ENCODE measurements at regions of chr2 and their contacts with region 1.

Region 1: GRCh38 chr2:197113275-197113711 is 186.8 kb upstream of the PGAP1 start:
- DNase-seq: no peak
- H3K4me3 ChIP-seq: no peak overlapping the region
- H3K27ac ChIP-seq: no peak overlapping the region
- H3K4me1 ChIP-seq: peaks cover 0 to 12% (median under 1%) of the 10 kb centered on the region in 4 donors
- H3K27me3 ChIP-seq: no peaks in the 10 kb centered on the region
- CTCF ChIP-seq: peak; percentile 56 to 71 (median 62)
- EP300 ChIP-seq: no peak
- POLR2A ChIP-seq: no peak

Region 2: DNA sequence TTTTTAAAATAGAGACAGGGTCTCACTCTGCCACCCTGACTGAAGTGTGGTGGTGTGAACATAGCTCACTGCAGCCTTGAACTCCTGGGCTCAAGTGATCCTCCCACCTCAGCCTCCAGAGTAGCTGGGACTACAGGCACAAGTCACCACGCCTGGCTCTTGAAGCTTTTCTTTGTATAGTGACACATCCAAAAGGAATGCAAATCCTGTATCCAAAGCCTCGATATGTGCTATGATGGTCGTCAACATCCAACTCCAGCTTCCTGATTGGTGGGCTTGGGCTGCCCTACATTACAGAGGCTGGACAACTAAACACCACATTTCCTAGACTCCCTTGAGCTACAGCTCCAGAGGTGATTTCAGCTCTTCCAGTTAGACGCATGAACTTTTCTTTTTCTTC is 85.1 kb before region 1 on chr2:
- in situ Hi-C with region 1: no loop called
- intact Hi-C with region 1: no loop called
- DNase-seq: no peak
- H3K4me3 ChIP-seq: no peak overlapping the region
- H3K27ac ChIP-seq: no peak overlapping the region
- H3K4me1 ChIP-seq: peaks cover 0 to 4% (median 2%) of the 10 kb centered on the region in 4 donors
- H3K27me3 ChIP-seq: no peaks in the 10 kb centered on the region
- CTCF ChIP-seq: no peak
- EP300 ChIP-seq: no peak
- POLR2A ChIP-seq: no peak

Region 3: GRCh38 chr2:197073701-197074433 is 39.4 kb before region 1 on chr2:
- in situ Hi-C with region 1: no loop called
- intact Hi-C with region 1: no loop called
- DNase-seq: no peak
- H3K4me3 ChIP-seq: no peak overlapping the region
- H3K27ac ChIP-seq: no peak overlapping the region
- H3K4me1 ChIP-seq: peaks cover 0 to 3% (median 0%) of the 10 kb centered on the region in 4 donors
- H3K27me3 ChIP-seq: no peaks in the 10 kb centered on the region
- CTCF ChIP-seq: no peak
- EP300 ChIP-seq: no peak
- POLR2A ChIP-seq: no peak

Region 4: DNA sequence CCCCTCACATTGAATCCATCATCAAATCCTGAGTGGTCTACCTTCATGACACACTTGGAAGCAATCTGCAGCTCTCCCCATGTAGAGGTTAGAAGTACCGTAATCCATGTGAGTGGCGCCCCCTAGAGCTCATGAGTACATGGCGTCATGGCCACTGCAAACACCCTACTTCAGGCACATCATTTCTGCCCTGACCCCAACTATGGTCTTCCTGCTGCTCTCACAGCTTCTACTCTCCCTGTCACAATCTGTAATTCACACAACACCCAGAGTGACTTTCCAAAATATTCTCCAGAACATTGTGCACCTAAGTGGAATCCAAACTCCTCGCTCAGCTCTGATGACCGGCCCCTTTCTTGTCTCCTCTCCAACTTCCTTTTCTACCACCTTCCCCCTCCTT is 55.4 kb after region 1 on chr2:
- in situ Hi-C with region 1: loop called in 1 of 4 experiments (anchors 10 kb)
- intact Hi-C with region 1: no loop called
- DNase-seq: peak; percentile 80
- H3K4me3 ChIP-seq: no peak overlapping the region
- H3K27ac ChIP-seq: no peak overlapping the region
- H3K4me1 ChIP-seq: peaks cover 0 to 13% (median 5%) of the 10 kb centered on the region in 4 donors
- H3K27me3 ChIP-seq: no peaks in the 10 kb centered on the region
- CTCF ChIP-seq: peak; percentile 52 to 72 (median 70)
- EP300 ChIP-seq: no peak
- POLR2A ChIP-seq: no peak

Region 5: DNA sequence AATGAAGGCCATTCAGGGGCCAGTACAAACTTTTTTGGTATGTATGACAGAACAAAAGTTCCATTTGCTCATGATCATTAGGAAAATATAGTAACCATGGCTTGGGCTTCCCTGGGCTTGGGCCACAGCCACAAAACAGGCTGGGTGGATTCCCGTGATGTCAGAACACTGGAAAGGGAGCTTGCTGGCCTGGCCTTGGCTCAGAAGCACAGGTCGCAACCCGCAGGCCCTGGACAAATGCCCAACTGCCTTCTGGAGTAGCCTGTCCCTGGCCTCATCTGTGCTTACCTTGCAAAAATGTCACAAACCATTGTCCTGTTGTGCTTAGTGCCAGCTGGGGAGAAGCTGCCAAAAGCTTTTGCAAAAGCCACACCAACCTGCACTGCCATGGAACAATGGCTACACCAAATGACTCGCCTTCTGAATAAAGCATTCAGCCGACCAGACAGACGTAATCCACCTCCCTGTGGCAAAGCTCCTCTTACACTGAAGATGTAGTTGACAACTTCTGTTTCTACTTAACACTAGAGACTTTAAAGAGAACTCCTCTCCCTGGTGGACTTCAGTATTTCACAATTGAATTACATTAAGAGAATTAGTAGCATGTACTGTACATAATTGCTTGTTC is 71.8 kb after region 1 on chr2:
- in situ Hi-C with region 1: loop called in 1 of 4 experiments (anchors 10 kb)
- intact Hi-C with region 1: no loop called
- DNase-seq: no peak
- H3K4me3 ChIP-seq: no peak overlapping the region
- H3K27ac ChIP-seq: no peak overlapping the region
- H3K4me1 ChIP-seq: peaks cover 0 to 5% (median 1%) of the 10 kb centered on the region in 4 donors
- H3K27me3 ChIP-seq: no peaks in the 10 kb centered on the region
- CTCF ChIP-seq: no peak
- EP300 ChIP-seq: no peak
- POLR2A ChIP-seq: no peak

Region 6: GRCh38 chr2:197310271-197310985 is 197.1 kb after region 1 on chr2 and contains the start of gene ANKRD44:
- in situ Hi-C with region 1: loop called in 2 of 4 experiments (anchors 5 to 25 kb)
- intact Hi-C with region 1: loop called (anchors 2 kb)
- DNase-seq: peak; percentile 90
- H3K4me3 ChIP-seq: peak within 1 kb of the TSS; percentile 71 to 83 (median 76)
- H3K27ac ChIP-seq: peak within 1 kb of the TSS; percentile 82 to 90 (median 88)
- H3K4me1 ChIP-seq: peaks cover 9 to 21% (median 15%) of the 10 kb centered on the region in 4 donors
- H3K27me3 ChIP-seq: no peaks in the 10 kb centered on the region
- CTCF ChIP-seq: peak; percentile 30 to 68 (median 48)
- EP300 ChIP-seq: no peak
- POLR2A ChIP-seq: peak; percentile 65
- total RNA-seq, gene ANKRD44: 13.9 to 46.8 (median 27.5) TPM

Region 7: GRCh38 chr2:197378494-197379307 is 265.4 kb after region 1 on chr2:
- in situ Hi-C with region 1: loop called in 2 of 4 experiments (anchors 10 kb)
- intact Hi-C with region 1: loop called (anchors 5 kb)
- DNase-seq: peak; percentile 52
- H3K4me3 ChIP-seq: no peak overlapping the region
- H3K27ac ChIP-seq: no peak overlapping the region
- H3K4me1 ChIP-seq: peaks cover 0 to 3% (median 0%) of the 10 kb centered on the region in 4 donors
- H3K27me3 ChIP-seq: no peaks in the 10 kb centered on the region
- CTCF ChIP-seq: peak; percentile 71 to 85 (median 73)
- EP300 ChIP-seq: no peak
- POLR2A ChIP-seq: no peak

Region 8: GRCh38 chr2:197383823-197384222 is 270.5 kb after region 1 on chr2:
- in situ Hi-C with region 1: loop called in 2 of 4 experiments (anchors 10 kb)
- intact Hi-C with region 1: loop called (anchors 5 kb)
- DNase-seq: no peak
- H3K4me3 ChIP-seq: no peak overlapping the region
- H3K27ac ChIP-seq: no peak overlapping the region
- H3K4me1 ChIP-seq: no peaks in the 10 kb centered on the region
- H3K27me3 ChIP-seq: no peaks in the 10 kb centered on the region
- CTCF ChIP-seq: no peak
- EP300 ChIP-seq: no peak
- POLR2A ChIP-seq: no peak

Measured in transverse colon (tissue), 4 donors.